ENCODE measurements at regions of chr5 and their contacts with region 1.

Region 1: GRCh38 chr5:169296419-169297143 is 4.4 kb downstream of the SLIT3 start:
- DNase-seq: no peak
- ATAC-seq: no peak
- H3K4me3 ChIP-seq: no peak overlapping the region
- H3K27ac ChIP-seq: no peak overlapping the region
- H3K4me1 ChIP-seq: peaks cover 0 to 7% of the 10 kb centered on the region in 2 experiments; a peak in 1 of 5 replicates
- H3K27me3 ChIP-seq: peaks cover 0 to 10% of the 10 kb centered on the region in 2 experiments; a peak in 3 of 5 replicates
- CTCF ChIP-seq: no peak
- EP300 ChIP-seq: no peak
- POLR2A ChIP-seq: no peak
- RAD21 ChIP-seq: no peak

Region 2: GRCh38 chr5:168698991-168699401 is 597.6 kb before region 1 on chr5:
- CTCF ChIA-PET with region 1: no interaction called
- POLR2A ChIA-PET with region 1: no interaction called
- in situ Hi-C with region 1: loop called (anchors 10 kb)
- intact Hi-C with region 1: no loop called
- DNase-seq: no peak
- ATAC-seq: no peak
- H3K4me3 ChIP-seq: no peak overlapping the region
- H3K27ac ChIP-seq: no peak overlapping the region
- H3K4me1 ChIP-seq: peaks cover 0 to 4% of the 10 kb centered on the region in 2 experiments; a peak in 1 of 5 replicates
- H3K27me3 ChIP-seq: peaks cover 3 to 16% of the 10 kb centered on the region in 2 experiments; a peak in 3 of 5 replicates
- CTCF ChIP-seq: no peak
- EP300 ChIP-seq: no peak
- POLR2A ChIP-seq: no peak
- RAD21 ChIP-seq: no peak

Region 3: DNA sequence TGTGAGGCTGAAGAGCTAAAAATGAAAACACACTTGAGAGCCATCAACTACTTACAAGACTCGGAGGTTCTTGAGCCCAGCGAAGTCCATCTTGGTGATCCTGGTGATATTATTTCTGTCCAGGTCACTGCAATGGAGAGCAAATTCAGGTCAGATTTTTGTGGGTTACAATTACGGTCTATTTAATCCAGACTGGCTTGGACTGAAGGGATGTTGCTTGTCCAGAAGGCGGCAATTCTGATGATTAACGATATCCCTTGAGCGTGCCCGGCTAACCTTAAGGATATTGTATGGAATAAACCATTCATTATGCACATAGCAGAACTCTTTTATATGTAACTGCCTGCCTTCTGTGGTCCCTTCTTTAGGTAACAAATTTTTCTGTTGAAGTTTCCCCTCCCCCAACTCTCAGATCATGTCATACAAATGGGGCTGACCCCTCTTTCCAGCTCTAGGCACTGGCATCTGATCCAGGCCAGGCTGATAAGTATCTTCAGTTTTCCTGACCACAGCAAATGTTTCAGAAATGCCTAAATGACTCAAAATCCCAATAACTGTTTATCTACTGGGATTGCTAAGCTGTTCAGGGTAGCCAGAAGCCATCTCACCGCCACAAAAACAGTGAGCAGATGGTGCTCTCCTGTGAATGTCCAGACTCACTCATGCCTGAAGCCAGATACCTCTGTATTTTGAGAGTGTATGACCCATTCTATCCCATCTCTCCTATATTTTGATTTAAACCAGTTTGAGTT is 45.1 kb before region 1 on chr5:
- CTCF ChIA-PET with region 1: no interaction called
- POLR2A ChIA-PET with region 1: no interaction called
- in situ Hi-C with region 1: no loop called
- intact Hi-C with region 1: no loop called
- DNase-seq: no peak
- ATAC-seq: no peak
- H3K4me3 ChIP-seq: no peak overlapping the region
- H3K27ac ChIP-seq: no peak overlapping the region
- H3K4me1 ChIP-seq: no peaks in the 10 kb centered on the region
- H3K27me3 ChIP-seq: no peaks in the 10 kb centered on the region
- CTCF ChIP-seq: no peak
- EP300 ChIP-seq: no peak
- POLR2A ChIP-seq: no peak
- RAD21 ChIP-seq: no peak

Region 4: GRCh38 chr5:170986598-170986997 is 1690.0 kb after region 1 on chr5:
- CTCF ChIA-PET with region 1: no interaction called
- POLR2A ChIA-PET with region 1: no interaction called
- in situ Hi-C with region 1: no loop called
- intact Hi-C with region 1: no loop called
- DNase-seq: no peak
- ATAC-seq: no peak
- H3K4me3 ChIP-seq: no peak overlapping the region
- H3K27ac ChIP-seq: no peak overlapping the region
- H3K4me1 ChIP-seq: no peaks in the 10 kb centered on the region
- H3K27me3 ChIP-seq: no peaks in the 10 kb centered on the region
- CTCF ChIP-seq: no peak
- EP300 ChIP-seq: no peak
- POLR2A ChIP-seq: no peak
- RAD21 ChIP-seq: peak in 1 of 2 experiments; percentile 5; a peak in 1 of 4 replicates